ENCODE measurements at regions of chr15 and their contacts with region 1.

Region 1: DNA sequence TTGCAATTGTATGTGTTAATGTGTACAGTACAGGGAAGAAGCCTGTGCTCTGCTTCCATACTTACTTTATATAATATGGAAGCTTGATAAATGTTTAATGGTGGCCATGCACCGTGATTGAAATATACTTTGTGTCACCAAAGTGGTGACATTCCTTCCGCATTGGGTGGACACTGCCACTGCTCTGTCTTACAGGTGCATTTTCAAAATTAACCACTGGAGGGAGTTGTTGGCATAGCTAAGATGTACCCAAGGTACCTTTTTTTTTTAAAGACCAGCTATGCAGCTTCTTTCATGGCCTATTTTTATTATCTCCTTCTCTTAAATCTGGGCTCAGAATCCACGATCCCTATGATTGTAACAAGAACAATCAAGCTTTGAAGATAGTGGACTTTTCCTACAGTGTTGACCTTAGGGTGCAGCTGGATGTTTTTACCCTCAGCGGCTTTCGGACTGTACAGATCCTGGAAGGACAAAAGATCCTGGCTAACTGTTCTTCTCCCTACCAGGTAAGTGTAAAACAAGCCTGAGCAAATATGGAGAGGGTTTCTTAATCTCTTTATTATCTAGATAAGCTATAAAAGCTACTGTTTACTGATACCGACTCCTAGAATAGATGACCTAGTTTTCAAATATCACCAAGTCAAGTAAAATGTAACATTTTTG is 21.6 kb upstream of the PAK6 start:
- DNase-seq: peak in 24 of 35 experiments; percentile 8 to 85 (median 25)
- ATAC-seq: peak; percentile 75 to 87 (median 82)
- H3K4me3 ChIP-seq: no peak overlapping the region
- H3K4me3 Mint-ChIP-seq: no peak overlapping the region
- H3K27ac ChIP-seq: no peak overlapping the region
- H3K27ac Mint-ChIP-seq: no peak overlapping the region
- H3K4me1 ChIP-seq: no peaks in the 10 kb centered on the region
- H3K4me1 Mint-ChIP-seq: no peaks in the 10 kb centered on the region
- H3K27me3 ChIP-seq: no peaks in the 10 kb centered on the region
- H3K27me3 Mint-ChIP-seq: no peaks in the 10 kb centered on the region

Region 2: GRCh38 chr15:40044717-40045571 is 172.3 kb before region 1 on chr15:
- CTCF ChIA-PET with region 1: interaction called, 3 to 16 read pairs
- POLR2A ChIA-PET with region 1: no interaction called
- DNase-seq: peak; percentile 53 to 88 (median 71)
- ATAC-seq: peak; percentile 76 to 93 (median 84)
- H3K4me3 ChIP-seq: peak overlapping the region in 1 of 2 donors; percentile 7
- H3K4me3 Mint-ChIP-seq: peak overlapping the region in 2 of 3 donors; percentile 35 to 66
- H3K27ac ChIP-seq: peak overlapping the region; percentile 4
- H3K27ac Mint-ChIP-seq: peak overlapping the region; percentile 65 to 95
- H3K4me1 ChIP-seq: peaks cover 33 to 58% of the 10 kb centered on the region in 2 experiments
- H3K4me1 Mint-ChIP-seq: peaks cover 44 to 73% (median 63%) of the 10 kb centered on the region in 3 donors
- H3K27me3 ChIP-seq: no peaks in the 10 kb centered on the region
- H3K27me3 Mint-ChIP-seq: no peaks in the 10 kb centered on the region

Region 3: DNA sequence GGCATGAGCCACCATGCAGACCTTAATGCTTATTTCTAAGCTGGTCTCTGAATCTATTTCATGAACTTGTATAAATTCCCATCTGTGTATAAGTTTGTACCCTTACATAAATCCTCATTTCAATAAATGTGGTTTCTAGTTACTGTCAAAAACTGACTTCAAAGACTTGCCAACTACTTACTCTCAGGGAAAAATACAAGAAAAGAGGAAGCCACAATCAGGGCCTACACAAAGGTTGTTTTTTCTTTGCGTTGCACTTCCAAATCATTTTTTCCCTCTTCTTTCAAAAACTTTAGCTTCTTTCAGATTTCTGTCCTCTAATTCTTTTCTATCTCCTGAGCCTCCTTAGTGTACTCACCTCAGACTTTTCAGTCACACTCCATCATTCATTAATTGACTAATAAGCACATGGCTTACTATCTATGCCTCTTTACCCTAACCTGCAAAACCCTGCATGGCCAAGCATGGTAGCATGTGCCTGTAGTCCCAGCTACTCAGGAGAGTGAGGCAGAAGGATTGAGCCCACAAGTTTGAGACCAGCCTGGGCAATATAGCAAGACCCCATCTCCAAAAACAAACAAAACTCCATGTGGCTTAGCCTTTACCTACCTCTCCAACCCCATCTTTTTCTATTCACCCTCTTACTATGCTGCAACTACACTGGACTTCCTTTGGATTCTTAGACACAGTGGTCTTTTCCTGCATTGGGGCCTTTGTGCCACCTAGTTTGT is 18.8 kb before region 1 on chr15:
- CTCF ChIA-PET with region 1: interaction called, 4 to 10 read pairs
- POLR2A ChIA-PET with region 1: interaction called in 1 of 2 experiments, 4 read pairs
- DNase-seq: no peak
- ATAC-seq: no peak
- H3K4me3 ChIP-seq: no peak overlapping the region
- H3K4me3 Mint-ChIP-seq: peak overlapping the region in 1 of 3 donors; percentile 20
- H3K27ac ChIP-seq: no peak overlapping the region
- H3K27ac Mint-ChIP-seq: no peak overlapping the region
- H3K4me1 ChIP-seq: peaks cover 10 to 25% of the 10 kb centered on the region in 2 experiments
- H3K4me1 Mint-ChIP-seq: peaks cover 24 to 27% (median 25%) of the 10 kb centered on the region in 3 donors
- H3K27me3 ChIP-seq: no peaks in the 10 kb centered on the region
- H3K27me3 Mint-ChIP-seq: no peaks in the 10 kb centered on the region

Region 4: GRCh38 chr15:40232625-40233070 is 15.4 kb after region 1 on chr15:
- CTCF ChIA-PET with region 1: no interaction called
- POLR2A ChIA-PET with region 1: no interaction called
- DNase-seq: no peak
- ATAC-seq: no peak
- H3K4me3 ChIP-seq: no peak overlapping the region
- H3K4me3 Mint-ChIP-seq: no peak overlapping the region
- H3K27ac ChIP-seq: no peak overlapping the region
- H3K27ac Mint-ChIP-seq: no peak overlapping the region
- H3K4me1 ChIP-seq: no peaks in the 10 kb centered on the region
- H3K4me1 Mint-ChIP-seq: no peaks in the 10 kb centered on the region
- H3K27me3 ChIP-seq: no peaks in the 10 kb centered on the region
- H3K27me3 Mint-ChIP-seq: peaks cover 2 to 6% of the 10 kb centered on the region in 2 donors

Region 5: GRCh38 chr15:40248006-40248783 is 30.9 kb after region 1 on chr15:
- CTCF ChIA-PET with region 1: no interaction called
- POLR2A ChIA-PET with region 1: no interaction called
- DNase-seq: no peak
- ATAC-seq: no peak
- H3K4me3 ChIP-seq: no peak overlapping the region
- H3K4me3 Mint-ChIP-seq: no peak overlapping the region
- H3K27ac ChIP-seq: no peak overlapping the region
- H3K27ac Mint-ChIP-seq: no peak overlapping the region
- H3K4me1 ChIP-seq: peaks cover 0 to 9% of the 10 kb centered on the region in 2 experiments
- H3K4me1 Mint-ChIP-seq: peaks cover 4 to 7% (median 4%) of the 10 kb centered on the region in 3 donors
- H3K27me3 ChIP-seq: peaks cover 2 to 32% of the 10 kb centered on the region in 2 experiments
- H3K27me3 Mint-ChIP-seq: peaks cover 9 to 18% of the 10 kb centered on the region in 2 donors

Region 6: DNA sequence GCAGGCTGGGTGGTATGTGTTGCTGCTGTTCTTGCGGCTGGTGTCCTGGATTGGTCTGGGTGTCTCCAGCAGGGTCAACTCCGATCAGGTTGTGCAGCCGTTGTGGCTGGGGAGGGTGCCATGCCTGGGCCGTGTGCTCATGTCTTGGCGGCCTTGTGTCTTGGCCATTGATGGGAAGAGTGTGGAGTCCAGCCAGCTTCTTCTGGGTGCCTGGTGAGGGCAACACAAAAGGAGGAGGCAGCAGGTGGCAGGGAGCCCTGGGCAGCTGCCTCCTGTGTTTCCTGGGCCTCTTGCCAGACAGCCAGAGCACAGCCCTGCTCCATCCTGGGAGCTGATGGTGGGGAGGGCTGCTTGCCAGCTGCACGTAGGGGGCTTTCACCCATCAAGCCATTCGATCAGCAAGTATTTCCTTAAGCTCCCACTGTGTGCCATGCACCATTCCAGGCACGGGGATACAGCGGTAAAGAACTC is 740.3 kb after region 1 on chr15:
- CTCF ChIA-PET with region 1: no interaction called
- POLR2A ChIA-PET with region 1: no interaction called
- DNase-seq: no peak
- ATAC-seq: no peak
- H3K4me3 ChIP-seq: no peak overlapping the region
- H3K4me3 Mint-ChIP-seq: no peak overlapping the region
- H3K27ac ChIP-seq: no peak overlapping the region
- H3K27ac Mint-ChIP-seq: no peak overlapping the region
- H3K4me1 ChIP-seq: peaks cover 5 to 14% of the 10 kb centered on the region in 2 experiments
- H3K4me1 Mint-ChIP-seq: peaks cover 14 to 15% (median 14%) of the 10 kb centered on the region in 3 donors
- H3K27me3 ChIP-seq: peaks cover 0 to 17% of the 10 kb centered on the region in 2 experiments
- H3K27me3 Mint-ChIP-seq: peaks cover 0 to 5% of the 10 kb centered on the region in 2 donors

Measured in T-cell (primary cell).